ENCODE measurements at regions of chr10 and their contacts with region 1.

Region 1: DNA sequence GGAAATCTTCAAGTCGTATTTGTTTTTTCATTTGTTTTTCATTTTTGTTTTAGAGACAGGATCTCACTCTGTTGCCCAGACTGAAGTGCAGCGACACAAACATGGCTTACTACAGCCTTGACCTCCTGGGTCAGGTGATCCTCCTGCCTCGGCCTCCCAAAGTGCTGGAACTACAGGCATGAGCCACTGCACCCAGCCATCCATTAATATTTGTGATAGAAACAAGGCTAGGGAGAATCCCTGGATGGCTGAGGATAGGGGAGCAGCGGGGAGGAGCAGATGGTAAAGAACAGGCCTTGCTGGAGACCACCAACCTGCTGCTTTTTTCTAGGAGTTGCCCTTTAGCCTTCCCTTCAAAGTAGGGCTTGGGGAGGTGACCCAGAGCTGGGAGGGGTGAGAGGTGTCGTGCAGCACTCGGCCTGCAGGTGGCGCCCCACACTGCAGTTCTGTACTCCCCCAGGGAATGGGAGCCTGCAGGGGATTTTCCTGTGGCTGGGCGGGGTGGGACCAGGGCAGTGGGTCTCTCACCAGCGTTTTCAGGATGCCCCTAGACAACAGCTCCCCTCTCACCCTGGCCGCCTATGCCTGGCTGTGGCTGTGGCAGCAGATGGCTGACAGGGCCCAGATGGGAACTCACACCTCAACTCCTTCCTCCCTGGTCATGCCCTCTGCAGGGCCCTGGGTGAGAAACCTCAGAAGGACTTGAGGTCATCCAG is 12.6 kb upstream of the CDH23 start:
- DNase-seq: peak; percentile 55 to 83 (median 71)
- ATAC-seq: peak; percentile 82 to 92 (median 89)
- H3K4me3 ChIP-seq: no peak overlapping the region
- H3K27ac ChIP-seq: no peak overlapping the region
- H3K4me1 ChIP-seq: peaks cover 0 to 6% (median 0%) of the 10 kb centered on the region in 12 donors
- H3K27me3 ChIP-seq: no peaks in the 10 kb centered on the region
- CTCF ChIP-seq: peak; percentile 79 to 92 (median 88)
- POLR2A ChIP-seq: no peak

Region 2: DNA sequence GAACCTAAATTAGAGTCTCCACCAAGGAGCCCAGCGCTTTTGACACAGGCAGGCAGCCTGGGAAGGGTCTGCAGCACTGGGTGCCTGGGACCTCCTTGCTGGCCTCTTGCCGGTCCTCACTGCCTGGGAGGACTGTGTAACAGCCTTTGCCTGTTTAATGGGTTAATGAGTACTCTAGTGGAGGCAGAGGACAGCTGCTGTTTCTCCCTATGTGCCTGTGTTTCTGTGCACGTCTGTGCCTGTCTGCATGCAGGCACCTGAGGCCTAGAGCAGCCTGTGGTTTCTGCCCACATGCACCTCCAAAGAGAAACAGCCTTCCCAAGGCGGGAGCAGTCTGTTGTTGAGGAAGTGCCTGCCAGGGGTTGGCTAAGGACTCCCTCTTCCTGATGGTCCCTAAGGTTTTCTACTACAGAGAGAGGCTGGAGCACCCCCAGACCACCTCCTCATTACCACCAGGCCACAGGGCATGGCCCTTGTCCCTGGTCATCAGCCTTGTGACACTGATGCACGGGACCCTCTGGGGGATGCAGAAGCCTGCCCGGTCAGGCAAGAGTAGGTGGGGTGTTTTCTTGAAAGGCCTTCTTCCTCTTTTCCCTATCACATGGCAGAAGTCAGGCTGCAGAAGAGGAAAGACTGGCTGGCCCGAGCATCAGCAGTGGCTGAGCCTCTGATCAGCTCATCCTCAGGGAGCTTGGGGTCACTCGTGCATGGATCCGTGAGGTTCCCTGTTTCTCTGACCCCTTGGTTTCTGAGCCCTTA is 50.8 kb before region 1 on chr10:
- intact Hi-C with region 1: no loop called
- DNase-seq: peak in 1 of 5 donors; percentile 50
- ATAC-seq: peak in 3 of 4 donors; percentile 37 to 55 (median 37)
- H3K4me3 ChIP-seq: no peak overlapping the region
- H3K27ac ChIP-seq: peak overlapping the region in 1 of 12 donors; percentile 71
- H3K4me1 ChIP-seq: peaks cover 0 to 19% (median 0%) of the 10 kb centered on the region in 12 donors
- H3K27me3 ChIP-seq: no peaks in the 10 kb centered on the region
- CTCF ChIP-seq: no peak
- POLR2A ChIP-seq: no peak

Region 3: GRCh38 chr10:71569775-71570588 is 185.9 kb after region 1 on chr10:
- intact Hi-C with region 1: loop called in 1 of 10 experiments (anchors 5 kb)
- DNase-seq: peak; percentile 51 to 74 (median 71)
- ATAC-seq: peak in 3 of 4 donors; percentile 22 to 73 (median 62)
- H3K4me3 ChIP-seq: no peak overlapping the region
- H3K27ac ChIP-seq: no peak overlapping the region
- H3K4me1 ChIP-seq: no peaks in the 10 kb centered on the region
- H3K27me3 ChIP-seq: no peaks in the 10 kb centered on the region
- CTCF ChIP-seq: peak; percentile 80 to 94 (median 86)
- POLR2A ChIP-seq: no peak

Region 4: DNA sequence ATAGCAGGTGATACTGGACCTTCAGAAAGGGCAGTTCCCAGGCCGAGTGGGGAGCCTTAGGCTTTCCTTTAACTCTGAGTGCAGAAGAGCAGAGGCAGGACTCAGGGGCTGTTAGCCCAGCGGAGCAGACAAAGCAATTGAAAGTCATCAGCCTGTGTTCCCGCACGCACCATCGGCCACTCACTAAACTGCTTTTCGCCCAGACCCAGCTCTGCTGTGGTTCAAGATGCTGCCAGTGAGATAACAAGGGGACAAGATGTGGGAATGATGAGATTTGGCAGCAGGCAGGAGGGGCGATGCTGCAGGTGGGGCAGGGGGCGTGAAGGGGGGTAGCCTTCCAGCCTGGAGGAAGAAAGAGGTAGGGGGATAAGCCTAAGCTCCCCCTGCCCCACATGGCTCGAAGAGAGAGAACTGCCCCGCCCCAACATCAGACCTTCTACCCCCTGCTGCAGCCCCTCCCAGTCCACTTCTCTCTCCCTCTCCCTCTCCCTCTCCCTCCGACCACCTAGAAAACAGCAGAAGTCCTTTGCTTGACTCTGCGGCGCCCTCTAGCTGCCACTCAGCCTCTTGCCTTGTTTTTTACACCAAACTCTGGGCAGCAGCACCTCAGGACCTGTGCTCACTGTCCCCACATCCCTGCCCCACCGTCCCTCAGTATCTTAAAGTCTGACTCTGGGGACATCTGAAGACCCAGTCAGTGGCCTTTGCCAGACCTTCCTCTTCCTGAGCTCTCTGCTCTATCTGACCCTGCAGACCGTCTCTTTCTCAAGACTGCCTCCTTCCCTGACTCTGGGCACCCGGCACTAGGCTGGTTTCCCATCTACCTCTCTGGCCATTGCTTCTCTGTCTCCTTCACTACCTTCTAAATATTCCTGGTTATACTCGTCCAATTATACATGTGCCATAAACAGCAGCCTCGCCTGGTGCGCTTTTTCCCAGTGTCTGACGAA is 225.0 kb after region 1 on chr10:
- intact Hi-C with region 1: loop called in 1 of 10 experiments (anchors 10 kb)
- DNase-seq: peak; percentile 72 to 87 (median 81)
- ATAC-seq: peak in 3 of 4 donors; percentile 22 to 68 (median 58)
- H3K4me3 ChIP-seq: no peak overlapping the region
- H3K27ac ChIP-seq: no peak overlapping the region
- H3K4me1 ChIP-seq: peaks cover 3 to 22% (median 17%) of the 10 kb centered on the region in 12 donors
- H3K27me3 ChIP-seq: no peaks in the 10 kb centered on the region
- CTCF ChIP-seq: peak; percentile 60 to 86 (median 82)
- POLR2A ChIP-seq: no peak

Region 5: DNA sequence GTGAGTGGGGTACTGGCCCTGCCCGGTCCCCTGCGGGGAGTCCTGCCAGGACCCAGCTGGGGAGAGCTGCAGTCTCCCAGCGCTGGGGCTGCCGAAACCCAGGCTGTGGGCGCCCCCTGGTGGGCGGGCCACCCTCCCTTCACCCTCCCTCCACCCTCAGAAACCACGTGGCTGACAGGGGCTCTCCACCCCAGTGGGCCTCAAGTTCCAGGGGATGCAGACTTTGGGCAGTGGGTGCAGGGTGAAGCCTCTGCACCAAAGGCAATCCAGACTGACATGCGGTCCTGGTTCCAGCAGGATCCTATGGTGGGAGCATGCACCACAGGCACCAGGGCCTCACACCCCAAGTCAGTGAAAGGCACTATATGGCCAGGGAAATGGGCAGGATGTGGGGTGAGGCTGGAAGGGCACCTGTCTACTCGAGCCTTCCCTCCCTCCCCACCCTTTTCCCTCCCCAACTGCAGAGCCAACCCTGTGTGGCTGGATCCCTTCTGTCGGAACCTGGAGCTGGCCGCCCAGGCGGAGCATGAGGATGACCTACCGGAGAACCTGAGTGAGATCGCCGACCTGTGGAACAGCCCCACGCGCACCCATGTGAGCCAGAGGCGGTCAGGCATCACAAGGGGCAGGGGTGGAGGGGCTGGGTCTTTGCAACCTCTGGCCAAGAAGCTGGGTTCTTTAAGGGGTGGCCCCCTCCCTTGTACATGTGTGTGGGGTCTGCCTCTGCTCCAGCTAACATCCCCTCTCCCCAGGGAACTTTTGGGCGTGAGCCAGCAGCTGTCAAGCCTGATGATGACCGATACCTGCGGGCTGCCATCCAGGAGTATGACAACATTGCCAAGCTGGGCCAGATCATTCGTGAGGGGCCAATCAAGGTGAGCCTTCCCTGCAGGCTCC is 428.1 kb after region 1 on chr10:
- intact Hi-C with region 1: loop called in 6 of 10 experiments (anchors 5 to 10 kb)
- DNase-seq: peak; percentile 57 to 87 (median 68)
- ATAC-seq: peak; percentile 66 to 87 (median 84)
- H3K4me3 ChIP-seq: no peak overlapping the region
- H3K27ac ChIP-seq: no peak overlapping the region
- H3K4me1 ChIP-seq: peaks cover 0 to 30% (median 10%) of the 10 kb centered on the region in 12 donors
- H3K27me3 ChIP-seq: peaks cover 0 to 9% (median 0%) of the 10 kb centered on the region in 9 donors
- CTCF ChIP-seq: peak; percentile 54 to 89 (median 84)
- POLR2A ChIP-seq: no peak

Region 6: DNA sequence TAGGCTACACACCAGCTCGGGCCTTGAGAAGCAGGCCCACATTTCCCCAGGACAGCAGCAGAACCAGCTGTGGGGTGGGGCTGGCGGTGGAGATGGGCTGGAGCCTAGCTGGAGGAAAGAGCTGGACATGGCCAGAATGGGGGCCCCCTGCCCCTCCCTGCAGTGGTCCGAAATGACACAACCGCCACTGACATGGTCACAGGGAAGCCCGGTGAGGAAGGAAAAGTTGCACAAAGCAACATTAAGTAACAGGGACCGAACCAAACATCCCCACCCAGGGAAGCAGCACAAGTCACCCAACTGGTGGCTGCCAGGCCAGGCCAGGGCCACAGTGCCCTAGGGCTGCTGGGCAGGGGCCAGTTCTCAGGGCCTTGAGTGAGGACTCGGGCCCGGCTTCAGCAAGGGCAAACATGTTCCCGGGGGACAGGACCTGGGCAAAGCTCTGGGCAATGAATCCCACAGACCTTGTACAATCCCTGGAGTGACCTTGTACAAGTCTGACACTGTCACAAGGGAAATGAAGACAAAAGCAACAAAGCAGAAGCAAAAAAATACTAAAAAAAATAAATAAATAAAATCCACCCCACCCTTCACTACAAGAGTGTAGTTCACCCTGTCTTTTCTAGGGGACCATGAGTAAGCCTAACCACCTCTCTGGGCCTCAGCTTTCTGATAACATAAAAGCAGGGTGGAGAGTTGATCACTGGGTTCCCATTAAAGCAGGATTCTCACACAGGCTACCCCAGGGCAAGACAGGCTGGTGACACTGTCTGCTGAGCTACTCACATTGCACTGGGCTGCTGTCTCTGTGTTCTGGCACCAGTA is 433.9 kb after region 1 on chr10:
- intact Hi-C with region 1: loop called in 6 of 10 experiments (anchors 5 to 10 kb)
- DNase-seq: peak; percentile 41 to 85 (median 76)
- ATAC-seq: peak; percentile 70 to 83 (median 74)
- H3K4me3 ChIP-seq: no peak overlapping the region
- H3K27ac ChIP-seq: peak overlapping the region; percentile 36 to 80 (median 70)
- H3K4me1 ChIP-seq: peaks cover 0 to 52% (median 22%) of the 10 kb centered on the region in 12 donors
- H3K27me3 ChIP-seq: no peaks in the 10 kb centered on the region
- CTCF ChIP-seq: no peak
- POLR2A ChIP-seq: no peak

Region 7: GRCh38 chr10:71888623-71889387 is 504.7 kb after region 1 on chr10:
- intact Hi-C with region 1: loop called in 2 of 10 experiments (anchors 10 kb)
- DNase-seq: peak; percentile 78 to 91 (median 87)
- ATAC-seq: peak; percentile 76 to 92 (median 92)
- H3K4me3 ChIP-seq: peak overlapping the region; percentile 26 to 70 (median 57)
- H3K27ac ChIP-seq: peak overlapping the region in 11 of 12 donors; percentile 50 to 96 (median 65)
- H3K4me1 ChIP-seq: peaks cover 0 to 61% (median 10%) of the 10 kb centered on the region in 12 donors
- H3K27me3 ChIP-seq: no peaks in the 10 kb centered on the region
- CTCF ChIP-seq: peak in 3 of 12 donors; percentile 5 to 27 (median 15)
- POLR2A ChIP-seq: peak in 1 of 2 donors; percentile 37

Region 8: GRCh38 chr10:71893920-71894319 is 509.8 kb after region 1 on chr10:
- intact Hi-C with region 1: loop called in 2 of 10 experiments (anchors 10 kb)
- DNase-seq: no peak
- ATAC-seq: no peak
- H3K4me3 ChIP-seq: no peak overlapping the region
- H3K27ac ChIP-seq: no peak overlapping the region
- H3K4me1 ChIP-seq: peaks cover 0 to 54% (median 7%) of the 10 kb centered on the region in 12 donors
- H3K27me3 ChIP-seq: no peaks in the 10 kb centered on the region
- CTCF ChIP-seq: no peak
- POLR2A ChIP-seq: no peak